Ascending aorta (tissue), 2 donors: ENCODE measurements at regions of chr1 and their contacts with region 1.

Region 1: GRCh38 chr1:27858072-27858958 is 14.0 kb upstream of the THEMIS2 start:
- DNase-seq: peak; percentile 47 to 91
- H3K4me3 ChIP-seq: no peak overlapping the region
- H3K27ac ChIP-seq: no peak overlapping the region
- H3K4me1 ChIP-seq: peaks cover 0 to 3% of the 10 kb centered on the region in 2 donors
- H3K27me3 ChIP-seq: no peaks in the 10 kb centered on the region
- CTCF ChIP-seq: peak; percentile 81 to 90 (median 82)

Region 2: DNA sequence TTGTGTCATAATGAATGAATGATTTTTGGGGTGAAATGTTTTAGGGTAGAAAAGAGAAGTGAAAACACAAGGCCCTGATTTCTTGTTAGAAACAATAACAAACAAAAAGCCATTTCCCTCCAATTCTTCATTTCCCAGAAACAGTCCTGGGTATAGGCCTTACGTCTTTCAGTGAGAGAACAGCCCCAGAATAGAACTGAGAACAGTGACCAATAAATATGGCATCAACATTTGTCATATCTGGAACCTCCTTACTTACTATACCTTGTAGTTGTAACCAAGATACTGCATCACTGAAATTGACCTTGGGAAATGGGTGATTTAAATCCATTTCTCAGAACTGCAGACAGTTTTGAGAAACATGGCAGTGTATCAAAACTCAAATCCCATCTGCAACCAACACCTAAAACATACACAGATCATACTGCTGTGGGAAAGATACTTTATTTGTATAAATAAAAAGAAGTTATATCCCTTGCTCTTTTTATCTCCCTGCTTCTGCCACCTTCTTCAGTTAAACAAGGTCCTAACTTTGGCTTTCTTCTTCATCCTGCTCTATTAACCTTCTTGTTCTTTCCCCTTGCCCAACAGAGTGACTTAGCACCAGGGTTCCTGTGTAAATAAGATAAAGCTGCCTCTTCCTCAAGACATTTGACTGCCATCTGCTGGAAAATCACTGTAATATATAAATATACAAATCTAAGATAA is 121.0 kb after region 1 on chr1:
- intact Hi-C with region 1: loop called (anchors 1 kb)
- DNase-seq: no peak
- H3K4me3 ChIP-seq: no peak overlapping the region
- H3K27ac ChIP-seq: peak overlapping the region; percentile 45 to 47
- H3K4me1 ChIP-seq: no peaks in the 10 kb centered on the region
- H3K27me3 ChIP-seq: no peaks in the 10 kb centered on the region
- CTCF ChIP-seq: peak; percentile 19 to 45 (median 24)